Prostate gland (tissue), 2 donors: ENCODE measurements at regions of chr3 and their contacts with region 1.

Region 1: GRCh38 chr3:128503164-128503651 is 10.2 kb upstream of the GATA2 start:
- DNase-seq: no peak
- H3K4me3 ChIP-seq: no peak overlapping the region
- H3K27ac ChIP-seq: no peak overlapping the region
- H3K4me1 ChIP-seq: no peaks in the 10 kb centered on the region
- H3K27me3 ChIP-seq: no peaks in the 10 kb centered on the region
- CTCF ChIP-seq: peak in 2 of 4 experiments; percentile 17 to 21
- POLR2A ChIP-seq: no peak

Region 2: DNA sequence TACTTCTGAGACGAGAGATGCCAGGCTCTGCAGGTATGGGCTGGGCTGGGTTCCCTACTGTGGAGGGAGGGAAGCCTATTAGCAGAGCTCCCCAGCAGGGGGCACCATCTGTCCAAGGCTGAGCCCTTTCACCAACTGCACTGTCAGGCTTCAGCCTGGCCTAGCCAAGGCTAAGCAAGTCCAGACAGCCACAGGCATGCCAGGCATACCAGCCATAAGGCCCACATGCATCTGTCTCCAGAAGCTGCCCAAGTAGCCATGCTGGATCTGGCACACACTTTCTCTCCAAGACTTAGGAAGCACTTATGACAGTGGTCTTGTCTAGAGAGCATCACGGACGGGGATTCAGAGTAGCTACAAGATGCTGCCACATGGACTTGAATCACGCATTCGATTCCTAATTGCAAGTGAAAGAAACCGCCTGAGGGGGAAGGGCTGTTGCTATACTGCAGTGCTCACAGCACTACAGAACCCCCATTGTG is 407.9 kb before region 1 on chr3:
- intact Hi-C with region 1: loop called (anchors 5 kb)
- DNase-seq: peak; percentile 90
- H3K4me3 ChIP-seq: no peak overlapping the region
- H3K27ac ChIP-seq: peak overlapping the region in 1 of 2 donors; percentile 39
- H3K4me1 ChIP-seq: no peaks in the 10 kb centered on the region
- H3K27me3 ChIP-seq: no peaks in the 10 kb centered on the region
- CTCF ChIP-seq: peak; percentile 39 to 93 (median 74)
- POLR2A ChIP-seq: no peak